ENCODE measurements at regions of chr3 and their contacts with region 1.

Region 1: GRCh38 chr3:45199837-45200648 is 26.0 kb downstream of the TMEM158 start:
- DNase-seq: no peak
- ATAC-seq: no peak
- H3K4me3 ChIP-seq: no peak overlapping the region
- H3K27ac ChIP-seq: peak overlapping the region in 1 of 2 donors; percentile 93
- H3K4me1 ChIP-seq: peaks cover 0 to 8% of the 10 kb centered on the region in 2 donors
- H3K27me3 ChIP-seq: no peaks in the 10 kb centered on the region

Region 2: DNA sequence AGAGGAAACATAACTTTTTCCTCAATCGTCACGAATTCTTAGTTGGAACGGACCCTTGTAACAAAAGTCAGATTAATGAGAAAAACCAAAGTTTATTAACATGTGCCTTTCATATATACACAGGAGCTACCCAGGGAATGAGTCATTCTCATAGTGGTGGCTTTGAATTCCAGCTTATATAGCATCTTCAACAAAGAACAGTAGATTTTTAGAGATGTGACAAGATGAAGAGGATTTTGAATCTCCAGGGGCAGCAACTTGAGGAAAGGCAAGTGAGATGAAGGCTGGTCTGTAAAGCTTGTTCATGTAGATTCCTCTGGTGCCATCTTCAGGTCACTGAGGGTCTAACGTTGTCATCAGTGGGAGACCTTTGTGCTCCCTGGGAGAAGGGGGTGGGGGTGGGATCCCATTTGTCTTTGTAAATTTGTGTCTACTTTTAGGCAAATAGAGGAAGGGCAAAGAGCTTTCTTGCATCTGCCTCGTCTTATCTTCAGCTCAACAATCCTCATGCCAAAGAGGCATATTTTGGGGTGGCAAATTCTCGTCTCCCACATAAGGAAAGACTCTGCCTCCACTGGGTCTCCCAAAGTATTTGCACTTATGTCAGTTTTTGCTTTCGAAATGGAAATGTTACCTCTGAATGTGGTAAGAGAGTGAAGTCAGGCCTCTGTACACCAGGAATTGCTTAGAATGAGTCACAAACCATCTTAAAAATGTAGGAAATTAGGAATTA is 144.5 kb before region 1 on chr3:
- intact Hi-C with region 1: loop called in 1 of 2 experiments (anchors 5 kb)
- DNase-seq: no peak
- ATAC-seq: no peak
- H3K4me3 ChIP-seq: no peak overlapping the region
- H3K27ac ChIP-seq: peak overlapping the region in 1 of 2 donors; percentile 29
- H3K4me1 ChIP-seq: no peaks in the 10 kb centered on the region
- H3K27me3 ChIP-seq: no peaks in the 10 kb centered on the region

Region 3: DNA sequence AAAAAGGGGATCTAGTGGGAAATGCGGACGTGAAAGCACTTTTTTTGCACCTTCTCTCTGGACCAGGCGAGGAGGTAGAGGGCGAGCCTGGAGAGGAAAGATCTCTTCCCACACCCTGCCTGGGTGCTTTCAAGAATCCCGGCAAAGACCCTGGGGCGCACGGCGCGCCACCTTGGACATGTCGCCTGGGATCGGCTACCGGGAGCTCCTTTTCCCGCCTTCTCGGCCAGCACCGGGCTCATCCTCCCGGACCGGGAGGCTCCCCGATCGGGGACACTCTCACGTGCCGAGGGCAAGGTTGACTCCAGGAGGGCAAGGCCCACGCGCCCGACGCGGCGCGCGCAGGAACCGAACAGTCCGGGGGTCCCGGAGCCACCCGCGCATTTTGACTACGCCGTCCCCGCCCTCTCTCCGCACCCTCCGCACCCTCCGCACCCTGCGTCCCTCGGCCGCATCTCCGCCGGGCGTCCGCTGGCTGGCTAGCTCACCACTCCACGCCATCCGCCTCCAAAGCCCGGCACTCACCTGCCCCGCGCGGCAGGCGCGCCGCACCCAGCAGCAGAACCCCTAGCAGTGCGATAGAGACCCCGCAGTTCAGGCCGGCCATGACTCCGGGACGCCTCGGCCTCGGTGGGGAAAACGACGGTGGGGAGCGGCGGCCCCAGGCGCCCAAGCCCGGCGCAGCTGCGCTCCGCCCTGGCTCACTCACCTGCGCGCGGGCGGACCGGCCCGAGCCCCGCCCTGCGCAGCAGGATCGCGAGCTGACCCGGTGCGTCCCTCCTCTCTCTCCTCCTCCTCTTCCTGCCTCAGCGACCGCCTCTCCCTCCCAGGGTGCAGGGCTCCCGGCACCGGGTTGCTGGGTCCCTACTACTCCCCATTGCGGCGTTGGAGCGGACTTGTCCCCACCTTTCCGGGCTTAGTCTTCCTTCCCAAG is 54.1 kb before region 1 on chr3 and contains the start of gene CDCP1:
- intact Hi-C with region 1: loop called in 1 of 2 experiments (anchors 5 kb)
- DNase-seq: peak in 1 of 2 donors; percentile 55
- ATAC-seq: peak; percentile 19
- H3K4me3 ChIP-seq: peak within 1 kb of the TSS in 1 of 2 donors; percentile 69
- H3K27ac ChIP-seq: no peak within 1 kb of the TSS
- H3K4me1 ChIP-seq: no peaks in the 10 kb centered on the region
- H3K27me3 ChIP-seq: no peaks in the 10 kb centered on the region
- total RNA-seq, gene CDCP1: 3.8 to 8.9 TPM

Region 4: GRCh38 chr3:45253316-45253715 is 53.3 kb after region 1 on chr3:
- intact Hi-C with region 1: loop called in 1 of 2 experiments (anchors 2 kb)
- DNase-seq: no peak
- ATAC-seq: no peak
- H3K4me3 ChIP-seq: no peak overlapping the region
- H3K27ac ChIP-seq: no peak overlapping the region
- H3K4me1 ChIP-seq: no peaks in the 10 kb centered on the region
- H3K27me3 ChIP-seq: no peaks in the 10 kb centered on the region

Measured in aorta (tissue), 5 donors.